Activated CD8-positive, alpha-beta T cell treated with anti-CD3 and anti-CD28 coated beads, Interleukin-2, amount 10 ng/mL, durations not matched to agents 7 days and 5 days (primary cell): ENCODE measurements at regions of chr10 and their contacts with region 1.

Region 1: GRCh38 chr10:93376372-93377293 is 105.5 kb downstream of the MYOF start:
- DNase-seq: peak; percentile 69
- ATAC-seq: peak; percentile 70
- H3K4me3 Mint-ChIP-seq: no peak overlapping the region
- H3K27ac Mint-ChIP-seq: no peak overlapping the region
- H3K4me1 Mint-ChIP-seq: peaks cover 15% of the 10 kb centered on the region
- H3K27me3 Mint-ChIP-seq: no peaks in the 10 kb centered on the region

Region 2: GRCh38 chr10:93363891-93364648 is 12.6 kb before region 1 on chr10:
- CTCF ChIA-PET with region 1: interaction called, 40 read pairs
- POLR2A ChIA-PET with region 1: no interaction called
- DNase-seq: no peak
- ATAC-seq: no peak
- H3K4me3 Mint-ChIP-seq: no peak overlapping the region
- H3K27ac Mint-ChIP-seq: no peak overlapping the region
- H3K4me1 Mint-ChIP-seq: peaks cover 6% of the 10 kb centered on the region
- H3K27me3 Mint-ChIP-seq: peaks cover 3% of the 10 kb centered on the region

Region 3: GRCh38 chr10:93413252-93413689 is 36.6 kb after region 1 on chr10:
- CTCF ChIA-PET with region 1: interaction called, 22 read pairs
- POLR2A ChIA-PET with region 1: interaction called, 4 read pairs
- DNase-seq: peak; percentile 70
- ATAC-seq: peak; percentile 87
- H3K4me3 Mint-ChIP-seq: peak overlapping the region; percentile 20
- H3K27ac Mint-ChIP-seq: peak overlapping the region; percentile 95
- H3K4me1 Mint-ChIP-seq: peaks cover 55% of the 10 kb centered on the region
- H3K27me3 Mint-ChIP-seq: no peaks in the 10 kb centered on the region

Region 4: GRCh38 chr10:93463678-93464476 is 87.2 kb after region 1 on chr10:
- CTCF ChIA-PET with region 1: interaction called, 13 read pairs
- POLR2A ChIA-PET with region 1: no interaction called
- DNase-seq: no peak
- ATAC-seq: no peak
- H3K4me3 Mint-ChIP-seq: no peak overlapping the region
- H3K27ac Mint-ChIP-seq: no peak overlapping the region
- H3K4me1 Mint-ChIP-seq: peaks cover 6% of the 10 kb centered on the region
- H3K27me3 Mint-ChIP-seq: peaks cover 2% of the 10 kb centered on the region

Region 5: GRCh38 chr10:93488956-93489528 is 112.4 kb after region 1 on chr10:
- CTCF ChIA-PET with region 1: interaction called, 521 read pairs
- POLR2A ChIA-PET with region 1: no interaction called
- DNase-seq: no peak
- ATAC-seq: no peak
- H3K4me3 Mint-ChIP-seq: no peak overlapping the region
- H3K27ac Mint-ChIP-seq: no peak overlapping the region
- H3K4me1 Mint-ChIP-seq: no peaks in the 10 kb centered on the region
- H3K27me3 Mint-ChIP-seq: peaks cover 29% of the 10 kb centered on the region

Region 6: DNA sequence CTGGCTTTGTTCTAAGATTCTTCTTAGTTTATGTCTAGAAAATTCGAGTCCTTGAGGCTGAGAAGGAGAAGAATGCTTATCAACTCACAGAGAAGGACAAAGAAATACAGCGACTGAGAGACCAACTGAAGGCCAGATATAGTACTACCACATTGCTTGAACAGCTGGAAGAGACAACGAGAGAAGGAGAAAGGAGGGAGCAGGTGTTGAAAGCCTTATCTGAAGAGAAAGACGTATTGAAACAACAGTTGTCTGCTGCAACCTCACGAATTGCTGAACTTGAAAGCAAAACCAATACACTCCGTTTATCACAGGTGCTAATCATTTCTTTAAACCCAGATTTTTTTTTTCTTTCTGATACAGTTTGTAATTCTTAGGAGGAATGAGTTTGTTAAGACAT is 126.4 kb after region 1 on chr10:
- CTCF ChIA-PET with region 1: interaction called, 183 read pairs
- POLR2A ChIA-PET with region 1: no interaction called
- DNase-seq: no peak
- ATAC-seq: no peak
- H3K4me3 Mint-ChIP-seq: no peak overlapping the region
- H3K27ac Mint-ChIP-seq: no peak overlapping the region
- H3K4me1 Mint-ChIP-seq: peaks cover 37% of the 10 kb centered on the region
- H3K27me3 Mint-ChIP-seq: no peaks in the 10 kb centered on the region